Colonic mucosa (tissue), 4 donors: ENCODE measurements at regions of chr11 and their contacts with region 1.

Region 1: GRCh38 chr11:9137293-9138132 is 46.1 kb upstream of the SCUBE2 start:
- DNase-seq: peak; percentile 84
- H3K4me3 ChIP-seq: no peak overlapping the region
- H3K27ac ChIP-seq: no peak overlapping the region
- H3K4me1 ChIP-seq: no peaks in the 10 kb centered on the region
- H3K27me3 ChIP-seq: no peaks in the 10 kb centered on the region
- CTCF ChIP-seq: peak; percentile 93

Region 2: GRCh38 chr11:8911029-8911826 is 226.3 kb before region 1 on chr11 and contains the start of gene AKIP1:
- intact Hi-C with region 1: loop called (anchors 5 kb)
- DNase-seq: peak; percentile 96
- H3K4me3 ChIP-seq: peak within 1 kb of the TSS; percentile 99
- H3K27ac ChIP-seq: peak within 1 kb of the TSS; percentile 89
- H3K4me1 ChIP-seq: peaks cover 4% of the 10 kb centered on the region
- H3K27me3 ChIP-seq: no peaks in the 10 kb centered on the region
- CTCF ChIP-seq: no peak
- total RNA-seq, gene AKIP1: 16.7 to 22.3 TPM

Region 3: GRCh38 chr11:9015677-9016076 is 121.8 kb before region 1 on chr11:
- intact Hi-C with region 1: loop called (anchors 2 kb)
- DNase-seq: peak; percentile 63
- H3K4me3 ChIP-seq: no peak overlapping the region
- H3K27ac ChIP-seq: no peak overlapping the region
- H3K4me1 ChIP-seq: no peaks in the 10 kb centered on the region
- H3K27me3 ChIP-seq: no peaks in the 10 kb centered on the region
- CTCF ChIP-seq: peak; percentile 68

Region 4: GRCh38 chr11:9193321-9193720 is 55.8 kb after region 1 on chr11:
- intact Hi-C with region 1: no loop called
- DNase-seq: no peak
- H3K4me3 ChIP-seq: no peak overlapping the region
- H3K27ac ChIP-seq: no peak overlapping the region
- H3K4me1 ChIP-seq: no peaks in the 10 kb centered on the region
- H3K27me3 ChIP-seq: no peaks in the 10 kb centered on the region
- CTCF ChIP-seq: no peak